Sigmoid colon (tissue), 7 donors: ENCODE measurements at regions of chr2 and their contacts with region 1.

Region 1: GRCh38 chr2:36507408-36507812 is 90.6 kb downstream of the FEZ2 start:
- DNase-seq: no peak
- H3K4me3 ChIP-seq: no peak overlapping the region
- H3K27ac ChIP-seq: peak overlapping the region in 1 of 4 donors; percentile 16
- H3K4me1 ChIP-seq: no peaks in the 10 kb centered on the region
- H3K27me3 ChIP-seq: no peaks in the 10 kb centered on the region
- CTCF ChIP-seq: peak; percentile 50 to 67 (median 63)
- EP300 ChIP-seq: no peak
- POLR2A ChIP-seq: no peak

Region 2: GRCh38 chr2:36653155-36653554 is 145.7 kb after region 1 on chr2:
- intact Hi-C with region 1: no loop called
- DNase-seq: no peak
- H3K4me3 ChIP-seq: no peak overlapping the region
- H3K27ac ChIP-seq: no peak overlapping the region
- H3K4me1 ChIP-seq: no peaks in the 10 kb centered on the region
- H3K27me3 ChIP-seq: no peaks in the 10 kb centered on the region
- CTCF ChIP-seq: no peak
- EP300 ChIP-seq: no peak
- POLR2A ChIP-seq: no peak

Region 3: DNA sequence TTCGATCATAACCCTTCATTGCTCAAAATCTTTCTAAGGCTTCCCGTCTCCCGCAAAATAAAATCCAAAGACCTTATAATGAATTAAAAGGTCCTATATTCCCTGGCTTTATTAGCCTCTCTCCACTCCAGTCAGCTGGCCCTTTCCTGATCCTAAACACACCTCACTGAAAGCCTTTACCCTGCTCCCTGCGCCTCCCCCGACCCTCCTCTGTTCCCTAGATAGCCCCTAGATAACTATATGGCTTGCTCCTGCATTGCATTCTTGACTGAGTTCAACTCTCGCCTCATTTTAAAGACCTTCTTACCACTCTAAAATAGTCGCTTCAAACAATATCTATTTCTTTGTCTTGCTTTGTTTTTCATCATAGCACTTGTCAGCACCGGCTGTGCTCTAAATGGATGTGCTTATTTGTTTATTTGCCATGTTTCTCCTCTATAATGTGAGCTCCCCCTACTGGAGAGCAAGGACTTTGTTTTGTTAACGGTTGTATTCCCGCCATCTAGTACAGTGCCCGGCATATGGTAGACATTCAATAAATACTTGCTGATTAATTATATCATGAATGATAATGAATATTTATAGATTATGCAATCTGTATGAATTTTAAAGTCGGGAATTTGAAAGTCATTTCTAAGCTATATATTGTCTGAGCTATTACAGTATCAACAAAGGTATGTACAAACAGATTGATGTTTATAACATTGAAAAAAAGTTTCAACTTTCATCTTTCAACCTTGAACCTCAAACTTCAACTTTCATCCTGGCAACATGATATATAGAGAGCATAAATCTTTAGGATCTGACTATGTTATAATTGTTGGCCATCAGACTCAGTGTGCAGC is 156.7 kb after region 1 on chr2:
- intact Hi-C with region 1: loop called (anchors 5 kb)
- DNase-seq: no peak
- H3K4me3 ChIP-seq: no peak overlapping the region
- H3K27ac ChIP-seq: no peak overlapping the region
- H3K4me1 ChIP-seq: peaks cover 0 to 6% (median 5%) of the 10 kb centered on the region in 4 donors
- H3K27me3 ChIP-seq: no peaks in the 10 kb centered on the region
- CTCF ChIP-seq: peak; percentile 28 to 68 (median 60)
- EP300 ChIP-seq: no peak
- POLR2A ChIP-seq: no peak